ENCODE measurements at regions of chr20 and their contacts with region 1.

Region 1: GRCh38 chr20:50744143-50744792 is 12.9 kb downstream of the PARD6B start:
- DNase-seq: no peak
- H3K4me3 ChIP-seq: no peak overlapping the region
- H3K27ac ChIP-seq: peak overlapping the region in 36 of 59 donors; percentile 2 to 80 (median 58)
- H3K27me3 ChIP-seq: no peaks in the 10 kb centered on the region
- CTCF ChIP-seq: peak in 18 of 56 donors; percentile 11 to 38 (median 23)

Region 2: DNA sequence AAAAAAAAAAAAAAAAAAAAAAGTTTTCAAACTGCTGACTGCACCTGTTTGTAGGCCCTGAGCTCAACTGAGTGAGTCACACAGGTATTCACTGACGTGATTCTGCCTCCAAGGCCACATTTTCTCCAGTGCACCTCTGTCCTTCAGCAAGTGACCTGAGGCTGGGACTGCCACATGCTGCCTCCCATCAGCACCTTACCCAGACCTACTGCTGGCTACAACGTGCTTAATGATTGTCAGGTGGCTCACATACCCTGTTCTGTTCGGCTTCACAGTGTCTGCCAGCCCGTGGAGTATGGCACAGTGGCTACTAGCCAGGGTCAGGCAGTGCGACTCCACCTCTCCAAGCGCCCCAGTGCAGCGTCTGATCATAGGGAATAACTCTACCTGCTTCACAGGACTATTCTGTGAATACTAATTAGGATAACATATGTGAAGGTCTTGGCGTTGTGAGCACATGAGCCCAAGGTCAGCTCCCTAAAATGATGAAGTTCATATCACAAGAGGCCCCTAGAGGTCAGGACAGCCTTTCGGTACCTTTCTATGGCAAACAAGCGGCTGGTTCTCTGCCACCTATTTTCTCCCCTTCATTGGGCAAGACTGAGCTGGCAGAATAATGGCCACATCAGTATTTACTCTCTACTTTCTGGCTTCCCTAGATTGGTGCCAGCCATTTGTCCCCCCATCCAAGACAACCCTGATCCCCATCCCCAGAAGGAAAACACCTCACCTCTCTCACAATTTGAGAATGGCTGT is 81.0 kb before region 1 on chr20:
- intact Hi-C with region 1: loop called in 1 of 2 experiments (anchors 10 kb)
- DNase-seq: peak in 1 of 10 donors; percentile 13
- H3K4me3 ChIP-seq: no peak overlapping the region
- H3K27ac ChIP-seq: peak overlapping the region in 3 of 59 donors; percentile 11 to 36 (median 27)
- H3K27me3 ChIP-seq: peaks cover 0 to 3% (median 0%) of the 10 kb centered on the region in 45 donors
- CTCF ChIP-seq: peak in 23 of 56 donors; percentile 1 to 56 (median 24)

Region 3: GRCh38 chr20:50788078-50788991 is 44.1 kb after region 1 on chr20:
- intact Hi-C with region 1: no loop called
- DNase-seq: peak in 4 of 10 donors; percentile 43 to 56 (median 44)
- H3K4me3 ChIP-seq: no peak overlapping the region
- H3K27ac ChIP-seq: peak overlapping the region in 5 of 59 donors; percentile 17 to 46 (median 29)
- H3K27me3 ChIP-seq: no peaks in the 10 kb centered on the region
- CTCF ChIP-seq: peak in 48 of 56 donors; percentile 10 to 56 (median 38)